ENCODE measurements at regions of chr1 and their contacts with region 1.

Region 1: DNA sequence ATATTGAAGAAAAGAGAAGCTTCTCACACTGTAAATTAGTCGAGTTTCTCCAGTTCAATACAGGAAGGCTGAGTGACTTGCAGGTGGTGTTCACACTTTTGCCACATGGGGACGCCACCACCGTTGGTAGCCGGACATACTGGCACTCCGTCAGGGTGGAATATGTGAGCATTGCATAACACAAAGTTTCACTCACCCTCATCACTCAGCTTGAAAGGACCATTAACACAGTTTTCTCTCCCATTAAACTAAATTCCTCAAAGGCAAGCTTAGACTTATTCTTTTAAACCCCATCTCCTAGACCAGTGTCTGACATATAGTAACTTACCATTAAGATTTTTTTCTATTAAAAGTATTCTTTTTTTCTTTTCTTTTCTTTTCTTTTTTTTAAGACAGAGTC is 105.3 kb upstream of the SERBP1 start:
- DNase-seq: peak; percentile 82 to 96
- H3K4me3 ChIP-seq: no peak overlapping the region
- CTCF ChIP-seq: peak in 2 of 3 donors; percentile 31 to 85
- POLR2A ChIP-seq: no peak

Region 2: DNA sequence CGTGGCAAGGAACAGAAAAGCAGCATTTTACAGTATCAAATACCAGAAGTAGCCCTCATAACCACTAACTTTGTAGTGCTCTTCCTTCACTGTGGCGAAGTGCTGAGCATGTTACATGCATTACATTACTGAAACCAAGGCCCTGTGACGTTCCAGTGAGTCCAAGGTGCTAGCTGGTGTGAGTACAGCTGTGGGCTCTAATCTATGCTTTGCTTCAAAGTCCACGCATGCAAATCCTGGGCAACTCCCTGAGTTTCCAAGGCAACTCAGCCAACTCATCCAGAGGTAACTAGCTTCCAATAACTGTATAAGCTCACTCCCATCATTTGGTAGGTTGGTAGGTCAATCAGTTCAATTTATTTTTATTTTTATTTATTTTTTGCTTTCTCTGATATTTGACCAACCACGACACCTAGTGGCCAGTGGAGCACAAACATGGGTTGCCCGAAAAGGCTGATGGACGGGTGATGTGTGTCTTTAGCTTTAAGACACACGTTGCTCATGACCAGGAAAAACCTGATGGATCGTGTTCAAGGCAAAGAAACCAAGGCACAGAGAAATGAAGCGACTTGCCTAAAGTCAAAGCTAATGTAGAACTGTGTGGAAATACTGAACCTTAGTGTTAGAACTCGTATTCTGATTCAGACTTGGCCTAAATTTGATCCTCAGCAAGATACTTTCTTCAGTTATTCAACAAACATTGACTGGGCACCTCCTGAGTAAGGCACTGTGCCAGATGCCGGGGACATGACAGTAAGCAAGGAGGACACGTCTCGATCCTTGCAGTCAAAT is 224.8 kb after region 1 on chr1:
- intact Hi-C with region 1: loop called (anchors 5 kb)
- DNase-seq: peak; percentile 58 to 89
- H3K4me3 ChIP-seq: no peak overlapping the region
- CTCF ChIP-seq: peak in 1 of 3 donors; percentile 92
- POLR2A ChIP-seq: no peak

Measured in lower leg skin (tissue), 4 donors.